Naive thymus-derived CD4-positive, alpha-beta T cell (primary cell): ENCODE measurements at regions of chr6 and their contacts with region 1.

Region 1: DNA sequence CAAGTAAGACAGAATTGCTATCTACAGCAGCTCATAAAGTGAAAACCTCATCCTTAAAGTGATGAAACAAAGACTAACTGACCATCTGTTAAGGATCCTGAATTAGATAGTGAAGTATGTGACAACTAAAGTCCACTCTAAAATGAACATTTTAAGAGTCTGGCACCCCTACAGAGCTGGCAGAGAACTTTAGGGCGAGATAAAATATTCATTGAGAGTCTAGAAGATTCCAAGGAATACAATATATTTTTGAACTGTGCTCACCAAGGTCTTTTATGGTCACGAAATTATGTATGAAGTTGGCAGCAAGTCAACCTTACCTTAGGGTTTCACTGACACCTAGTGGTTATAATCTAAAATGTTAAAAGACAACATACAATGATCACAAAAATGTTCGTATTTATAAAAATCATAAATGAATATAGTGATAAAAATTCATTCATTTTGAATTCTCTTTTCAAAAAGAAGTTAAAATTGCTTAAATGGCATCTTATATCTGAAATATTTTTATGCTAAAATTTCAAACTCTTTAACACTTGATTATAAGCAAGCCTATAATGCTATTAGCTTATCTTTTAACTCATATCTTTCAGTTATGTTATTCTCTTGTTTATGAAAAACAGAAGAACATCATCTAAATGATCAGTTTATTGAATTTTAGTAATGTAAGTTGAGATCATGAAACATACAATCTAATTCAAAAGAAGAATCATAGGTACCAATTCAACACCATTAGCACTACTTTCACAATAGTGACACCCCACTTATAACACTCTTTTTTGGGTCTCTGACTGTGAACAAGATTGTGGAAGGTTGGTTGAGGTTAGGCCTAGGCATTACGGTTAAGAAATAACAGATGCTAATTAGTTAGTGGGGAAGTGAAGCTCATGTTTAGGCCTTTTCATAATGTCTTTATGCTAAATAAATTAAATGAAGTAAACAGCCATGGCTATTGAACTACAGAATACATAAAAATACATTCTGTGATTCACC is 27.5 kb downstream of the RSPH3 start:
- DNase-seq: peak in 6 of 9 donors; percentile 41 to 68 (median 60)
- ATAC-seq: peak; percentile 75
- H3K4me3 ChIP-seq: no peak overlapping the region
- H3K4me3 Mint-ChIP-seq: no peak overlapping the region
- H3K27ac ChIP-seq: no peak overlapping the region
- H3K27ac Mint-ChIP-seq: no peak overlapping the region
- H3K4me1 ChIP-seq: no peaks in the 10 kb centered on the region
- H3K4me1 Mint-ChIP-seq: peaks cover 0 to 6% (median 0%) of the 10 kb centered on the region in 7 donors
- H3K27me3 ChIP-seq: no peaks in the 10 kb centered on the region
- H3K27me3 Mint-ChIP-seq: peaks cover 0 to 6% (median 0%) of the 10 kb centered on the region in 5 donors

Region 2: DNA sequence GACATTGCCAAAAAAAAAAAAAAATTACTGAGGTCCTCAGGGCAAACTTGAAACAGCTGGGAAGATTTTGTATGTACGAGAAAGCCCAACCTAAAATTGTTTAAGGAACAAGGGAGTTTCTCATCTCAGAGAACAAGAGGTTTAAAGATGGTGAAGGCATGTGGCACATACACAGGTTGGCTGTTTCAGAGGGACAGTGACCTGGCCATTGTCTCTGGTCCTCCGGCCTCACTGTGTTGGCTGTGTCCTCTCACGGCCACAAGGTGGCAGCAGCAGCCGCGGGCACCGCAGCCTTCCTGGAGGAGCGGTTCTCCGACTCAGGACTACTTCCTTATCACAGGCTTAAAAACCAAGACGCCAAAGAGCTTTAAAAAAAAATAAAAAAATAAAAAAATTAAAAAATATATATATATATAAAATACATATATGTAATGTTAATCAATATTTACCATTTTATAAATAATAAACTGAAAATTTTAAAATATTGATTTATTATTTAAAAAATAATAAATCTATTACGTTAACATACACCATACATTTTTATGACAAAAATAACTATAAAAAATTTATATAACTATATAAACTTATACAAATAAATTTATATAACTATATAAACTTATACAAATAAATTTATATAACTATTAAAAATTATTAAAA is 751.6 kb before region 1 on chr6:
- CTCF ChIA-PET with region 1: interaction called, 3 read pairs
- POLR2A ChIA-PET with region 1: no interaction called
- intact Hi-C with region 1: loop called in 1 of 2 experiments (anchors 1 kb)
- DNase-seq: peak; percentile 23 to 73 (median 60)
- ATAC-seq: peak; percentile 91
- H3K4me3 ChIP-seq: no peak overlapping the region
- H3K4me3 Mint-ChIP-seq: no peak overlapping the region
- H3K27ac ChIP-seq: no peak overlapping the region
- H3K27ac Mint-ChIP-seq: peak overlapping the region in 1 of 9 donors; percentile 63
- H3K4me1 ChIP-seq: no peaks in the 10 kb centered on the region
- H3K4me1 Mint-ChIP-seq: peaks cover 0 to 13% (median 0%) of the 10 kb centered on the region in 7 donors
- H3K27me3 ChIP-seq: no peaks in the 10 kb centered on the region
- H3K27me3 Mint-ChIP-seq: peaks cover 0 to 4% (median 0%) of the 10 kb centered on the region in 5 donors

Region 3: GRCh38 chr6:158660333-158660754 is 312.2 kb before region 1 on chr6:
- CTCF ChIA-PET with region 1: interaction called, 4 read pairs
- POLR2A ChIA-PET with region 1: no interaction called
- intact Hi-C with region 1: loop called (anchors 1 kb)
- DNase-seq: peak in 7 of 9 donors; percentile 62 to 82 (median 78)
- ATAC-seq: peak; percentile 80
- H3K4me3 ChIP-seq: no peak overlapping the region
- H3K4me3 Mint-ChIP-seq: peak overlapping the region; percentile 25 to 77 (median 70)
- H3K27ac ChIP-seq: peak overlapping the region; percentile 54
- H3K27ac Mint-ChIP-seq: peak overlapping the region; percentile 29 to 97 (median 90)
- H3K4me1 ChIP-seq: peaks cover 9 to 36% of the 10 kb centered on the region in 2 donors
- H3K4me1 Mint-ChIP-seq: peaks cover 15 to 76% (median 62%) of the 10 kb centered on the region in 7 donors
- H3K27me3 ChIP-seq: no peaks in the 10 kb centered on the region
- H3K27me3 Mint-ChIP-seq: no peaks in the 10 kb centered on the region

Region 4: DNA sequence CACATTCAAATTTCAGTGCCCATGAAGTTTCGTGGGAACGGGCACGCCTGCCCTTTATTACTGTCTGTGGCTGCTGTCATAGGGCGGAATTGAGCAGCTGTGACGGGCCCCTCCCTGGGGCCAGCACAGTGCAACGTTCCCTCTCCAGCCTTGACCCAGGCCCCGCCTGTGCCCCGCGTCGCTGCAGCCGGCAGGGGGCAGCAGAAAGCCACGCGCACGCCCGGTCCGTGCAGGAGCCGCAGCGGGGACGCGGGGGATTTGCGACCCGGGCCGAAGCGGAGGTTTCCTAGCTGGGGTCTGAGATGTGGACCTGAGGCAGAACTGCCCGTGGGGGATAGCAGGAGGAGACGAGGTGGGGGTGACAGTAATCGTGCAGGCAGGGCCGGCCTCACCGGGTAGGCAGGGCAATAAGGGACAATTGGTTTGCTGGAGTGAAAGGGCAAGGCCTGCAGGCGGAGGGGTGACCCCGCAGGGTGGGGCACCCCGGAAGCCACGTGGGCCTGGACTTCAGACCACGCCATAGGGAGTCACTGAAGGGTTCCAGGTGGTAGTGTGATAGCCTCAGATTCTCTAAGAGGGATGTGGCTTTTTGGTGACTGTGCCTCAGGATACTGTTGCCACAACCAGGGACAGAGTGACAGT is 268.2 kb before region 1 on chr6:
- CTCF ChIA-PET with region 1: interaction called, 69 read pairs
- POLR2A ChIA-PET with region 1: interaction called, 3 read pairs
- intact Hi-C with region 1: loop called (anchors 1 kb)
- DNase-seq: peak; percentile 55 to 85 (median 74)
- ATAC-seq: peak; percentile 98
- H3K4me3 ChIP-seq: peak overlapping the region; percentile 60
- H3K4me3 Mint-ChIP-seq: peak overlapping the region; percentile 73 to 90 (median 84)
- H3K27ac ChIP-seq: peak overlapping the region; percentile 35
- H3K27ac Mint-ChIP-seq: peak overlapping the region in 8 of 9 donors; percentile 14 to 84 (median 64)
- H3K4me1 ChIP-seq: peaks cover 8 to 9% of the 10 kb centered on the region in 2 donors
- H3K4me1 Mint-ChIP-seq: peaks cover 7 to 27% (median 15%) of the 10 kb centered on the region in 7 donors
- H3K27me3 ChIP-seq: no peaks in the 10 kb centered on the region
- H3K27me3 Mint-ChIP-seq: no peaks in the 10 kb centered on the region

Region 5: DNA sequence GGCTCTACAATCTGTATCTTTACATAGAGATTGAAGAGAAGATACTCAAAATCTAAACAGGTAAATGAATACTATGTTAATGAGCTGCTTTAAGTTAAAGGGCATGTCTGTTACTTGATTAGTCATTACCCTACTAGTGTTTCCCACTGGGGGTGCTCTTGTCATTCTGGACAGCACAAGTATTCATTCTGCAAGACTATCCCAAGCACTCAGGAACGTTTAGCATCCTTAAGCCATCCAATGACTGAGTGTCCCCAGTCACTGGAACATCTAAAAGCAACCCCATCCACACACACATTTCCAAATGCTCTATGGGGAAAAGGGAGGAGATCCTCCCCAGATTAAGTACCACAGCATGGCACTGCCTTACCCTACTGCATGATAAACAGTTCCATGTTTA is 179.1 kb before region 1 on chr6:
- CTCF ChIA-PET with region 1: interaction called, 37 read pairs
- POLR2A ChIA-PET with region 1: no interaction called
- intact Hi-C with region 1: loop called (anchors 1 kb)
- DNase-seq: peak in 3 of 9 donors; percentile 29 to 39 (median 36)
- ATAC-seq: peak; percentile 56
- H3K4me3 ChIP-seq: no peak overlapping the region
- H3K4me3 Mint-ChIP-seq: peak overlapping the region in 1 of 10 donors; percentile 29
- H3K27ac ChIP-seq: no peak overlapping the region
- H3K27ac Mint-ChIP-seq: peak overlapping the region in 5 of 9 donors; percentile 25 to 82 (median 79)
- H3K4me1 ChIP-seq: peaks cover 19 to 77% of the 10 kb centered on the region in 2 donors
- H3K4me1 Mint-ChIP-seq: peaks cover 47 to 87% (median 80%) of the 10 kb centered on the region in 7 donors
- H3K27me3 ChIP-seq: no peaks in the 10 kb centered on the region
- H3K27me3 Mint-ChIP-seq: no peaks in the 10 kb centered on the region

Region 6: DNA sequence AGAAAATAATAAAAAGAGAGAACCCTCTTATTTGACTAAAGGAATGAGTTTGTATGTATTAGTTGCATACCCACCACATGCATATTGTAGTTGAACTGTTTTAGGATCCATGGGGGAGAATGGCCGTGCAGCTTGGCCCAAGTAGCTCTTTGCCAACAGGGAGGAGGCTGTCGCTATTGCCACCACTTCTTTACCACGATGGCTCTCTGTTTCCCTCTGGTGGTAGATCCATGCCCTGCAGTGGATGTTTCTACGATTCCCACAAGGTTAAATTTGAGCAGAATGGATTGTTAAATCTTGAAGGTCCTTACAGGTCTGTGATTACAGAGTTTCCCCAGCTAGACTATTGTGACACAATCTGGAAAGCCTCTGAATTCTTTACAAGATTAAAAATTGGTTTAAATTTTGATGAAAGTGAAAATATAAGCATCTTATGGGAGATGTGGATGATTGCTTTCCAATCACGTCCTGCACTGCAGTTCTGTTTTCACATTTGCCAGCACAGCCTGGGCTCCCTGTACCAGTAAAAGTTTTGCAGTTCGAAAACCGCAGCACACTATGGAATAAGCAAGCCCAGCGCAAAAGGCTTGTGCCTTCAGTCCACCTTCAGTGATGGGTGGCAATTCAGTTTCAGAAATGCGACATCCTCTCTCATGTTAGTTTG is 162.3 kb after region 1 on chr6:
- CTCF ChIA-PET with region 1: interaction called, 5 read pairs
- POLR2A ChIA-PET with region 1: no interaction called
- intact Hi-C with region 1: loop called in 1 of 2 experiments (anchors 1 kb)
- DNase-seq: peak; percentile 46 to 77 (median 68)
- ATAC-seq: peak; percentile 96
- H3K4me3 ChIP-seq: no peak overlapping the region
- H3K4me3 Mint-ChIP-seq: no peak overlapping the region
- H3K27ac ChIP-seq: no peak overlapping the region
- H3K27ac Mint-ChIP-seq: no peak overlapping the region
- H3K4me1 ChIP-seq: no peaks in the 10 kb centered on the region
- H3K4me1 Mint-ChIP-seq: peaks cover 0 to 9% (median 0%) of the 10 kb centered on the region in 7 donors
- H3K27me3 ChIP-seq: no peaks in the 10 kb centered on the region
- H3K27me3 Mint-ChIP-seq: peaks cover 0 to 42% (median 7%) of the 10 kb centered on the region in 5 donors

Region 7: DNA sequence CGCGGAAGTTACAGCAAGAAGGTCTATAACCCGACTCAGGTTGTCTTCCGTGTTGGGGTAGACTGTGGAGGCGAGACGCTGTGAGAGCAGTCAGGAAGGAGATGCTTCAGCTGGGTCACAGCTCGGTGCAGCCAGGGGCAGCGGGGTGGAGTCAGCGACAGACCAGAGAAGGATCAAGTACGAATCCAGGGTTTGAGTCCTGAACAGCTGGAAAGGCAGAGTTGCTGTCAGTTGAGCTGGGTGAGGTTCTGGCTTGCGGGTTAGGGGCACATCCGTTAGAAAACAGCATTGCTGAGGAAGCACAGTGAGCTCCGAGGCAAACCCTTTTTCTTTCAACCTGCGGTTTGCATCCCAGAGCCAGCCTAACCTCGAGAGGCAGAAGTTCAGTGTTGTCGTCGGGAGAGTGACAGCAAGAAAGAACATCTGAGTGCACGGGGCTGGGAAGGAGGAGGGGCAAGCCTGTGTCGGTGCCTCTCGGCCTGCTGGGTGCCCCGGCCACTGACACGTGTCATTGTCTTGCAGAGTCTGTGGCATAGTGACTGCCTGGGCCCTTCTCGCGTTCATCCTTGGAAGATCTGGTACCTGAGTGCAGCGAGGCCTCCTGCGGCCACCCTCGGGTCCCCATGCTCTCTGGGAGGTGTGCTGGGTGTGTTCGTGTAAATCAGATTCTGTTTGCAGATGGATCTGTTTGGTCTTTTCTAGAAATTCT is 847.5 kb after region 1 on chr6:
- CTCF ChIA-PET with region 1: no interaction called
- POLR2A ChIA-PET with region 1: no interaction called
- intact Hi-C with region 1: no loop called
- DNase-seq: peak in 8 of 9 donors; percentile 16 to 74 (median 65)
- ATAC-seq: peak; percentile 82
- H3K4me3 ChIP-seq: peak overlapping the region; percentile 40
- H3K4me3 Mint-ChIP-seq: peak overlapping the region; percentile 81 to 93 (median 86)
- H3K27ac ChIP-seq: peak overlapping the region; percentile 43
- H3K27ac Mint-ChIP-seq: peak overlapping the region; percentile 80 to 97 (median 94)
- H3K4me1 ChIP-seq: peaks cover 0 to 32% of the 10 kb centered on the region in 2 donors
- H3K4me1 Mint-ChIP-seq: peaks cover 15 to 49% (median 30%) of the 10 kb centered on the region in 7 donors
- H3K27me3 ChIP-seq: no peaks in the 10 kb centered on the region
- H3K27me3 Mint-ChIP-seq: no peaks in the 10 kb centered on the region